ENCODE measurements at regions of chr12 and their contacts with region 1.

Region 1: GRCh38 chr12:49783917-49784676 is 42.7 kb downstream of the TMBIM6 start:
- H3K4me3 Mint-ChIP-seq: no peak overlapping the region
- H3K27ac Mint-ChIP-seq: peak overlapping the region; percentile 45
- H3K4me1 Mint-ChIP-seq: peaks cover 12% of the 10 kb centered on the region
- H3K27me3 Mint-ChIP-seq: peaks cover 15% of the 10 kb centered on the region

Region 2: DNA sequence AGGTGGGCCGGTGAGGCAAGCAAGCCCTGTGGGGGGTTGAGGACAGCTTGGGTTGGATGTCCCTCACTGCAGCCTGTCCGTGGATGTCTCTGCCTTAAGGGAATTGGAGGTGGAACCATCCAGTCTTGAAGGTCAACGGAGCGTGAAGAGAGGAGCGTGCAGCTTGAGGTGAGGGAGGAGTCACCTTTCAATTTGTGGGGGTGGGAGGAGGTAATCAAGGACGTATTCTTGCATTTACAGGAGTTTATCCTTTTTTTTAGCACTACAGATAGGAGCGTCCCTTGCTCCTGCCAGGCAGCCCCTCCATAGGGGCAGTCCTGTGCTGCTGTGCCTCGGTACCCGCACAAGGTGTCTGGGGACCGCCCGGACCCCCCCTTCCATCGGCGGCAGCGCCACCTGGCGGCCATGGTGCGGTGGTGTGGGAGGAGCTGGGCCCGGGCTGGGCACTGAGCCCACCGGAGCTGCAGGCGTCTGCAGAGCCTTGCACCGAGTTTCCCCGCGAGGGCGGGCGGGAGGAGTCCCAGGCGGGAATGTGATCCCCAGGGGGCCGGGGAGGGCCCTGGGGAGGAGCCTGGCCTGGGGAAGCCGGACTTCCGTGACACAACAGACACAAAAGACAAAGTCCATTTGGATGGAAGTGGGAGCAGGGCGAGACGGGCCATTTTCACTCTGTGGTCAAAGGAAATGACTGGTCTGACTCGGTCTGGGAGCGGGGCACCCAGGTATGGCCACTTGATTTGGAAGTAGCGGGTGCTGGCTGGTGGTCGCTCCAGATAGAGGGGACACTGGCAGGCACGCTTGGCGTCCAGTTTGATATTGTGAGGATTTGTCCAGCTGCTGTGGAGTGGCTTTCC is 436.5 kb before region 1 on chr12:
- intact Hi-C with region 1: no loop called
- H3K4me3 Mint-ChIP-seq: peak overlapping the region; percentile 2
- H3K27ac Mint-ChIP-seq: peak overlapping the region; percentile 54
- H3K4me1 Mint-ChIP-seq: peaks cover 40% of the 10 kb centered on the region
- H3K27me3 Mint-ChIP-seq: peaks cover 91% of the 10 kb centered on the region

Region 3: DNA sequence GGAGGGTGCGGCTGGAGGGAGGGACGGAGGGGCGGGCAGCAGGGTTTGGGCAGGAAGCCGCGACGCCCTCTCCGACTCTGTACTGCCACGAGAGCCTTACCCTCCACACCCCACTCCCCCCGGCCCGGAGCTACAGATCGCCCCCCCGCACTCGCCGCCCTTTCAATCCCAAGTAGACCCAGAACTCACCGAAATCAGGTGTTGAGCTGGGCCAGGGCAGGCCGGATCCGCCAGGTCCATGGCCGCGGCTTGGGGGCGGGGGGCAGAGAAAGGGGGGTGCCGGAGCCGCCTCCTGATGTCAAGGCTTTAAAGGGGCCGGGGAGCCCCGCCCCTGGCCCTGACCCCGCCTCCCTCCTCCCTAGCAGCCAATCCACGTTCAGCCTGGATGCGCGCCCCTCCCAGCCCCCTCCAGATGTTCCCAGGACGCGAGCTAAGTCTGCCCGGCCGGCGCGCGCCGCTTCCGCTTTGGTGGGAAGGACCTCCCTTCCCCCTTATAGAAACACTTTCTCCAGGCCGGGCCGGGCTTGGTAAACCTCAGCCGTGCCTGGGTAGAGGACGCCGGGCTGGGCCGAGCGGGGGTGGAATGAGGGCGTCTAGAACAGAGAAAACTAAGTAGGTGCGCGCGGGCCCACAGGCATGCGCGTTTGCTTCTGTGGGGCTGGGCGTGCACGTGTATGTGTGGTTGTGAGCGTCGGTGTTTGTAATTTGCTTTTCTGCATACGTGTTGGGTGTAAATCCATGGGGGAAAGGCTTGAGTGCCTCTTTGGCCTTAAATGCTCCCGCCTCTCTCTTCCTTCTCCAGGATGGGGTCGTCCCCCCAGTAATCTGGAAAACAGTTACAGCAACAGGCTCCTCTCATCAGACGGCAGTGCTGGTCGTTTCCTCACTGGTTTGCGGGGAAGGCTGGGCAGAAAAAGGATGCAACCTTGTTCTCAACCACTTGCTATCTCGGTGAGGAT is 44.3 kb after region 1 on chr12 and contains the start of gene NCKAP5L:
- intact Hi-C with region 1: loop called (anchors 5 kb)
- H3K4me3 Mint-ChIP-seq: peak within 1 kb of the TSS; percentile 99
- H3K27ac Mint-ChIP-seq: peak within 1 kb of the TSS; percentile 100
- H3K4me1 Mint-ChIP-seq: peaks cover 54% of the 10 kb centered on the region
- H3K27me3 Mint-ChIP-seq: no peaks in the 10 kb centered on the region

Measured in dendritic cell treated with granulocyte-macrophage colony-stimulating factor and Interleukin-4, amounts not matched to agents 40 ng/mL and 50 ng/mL, for 4 days (primary cell).